Common myeloid progenitor, CD34-positive (primary cell): ENCODE measurements at regions of chr16 and their contacts with region 1.

Region 1: DNA sequence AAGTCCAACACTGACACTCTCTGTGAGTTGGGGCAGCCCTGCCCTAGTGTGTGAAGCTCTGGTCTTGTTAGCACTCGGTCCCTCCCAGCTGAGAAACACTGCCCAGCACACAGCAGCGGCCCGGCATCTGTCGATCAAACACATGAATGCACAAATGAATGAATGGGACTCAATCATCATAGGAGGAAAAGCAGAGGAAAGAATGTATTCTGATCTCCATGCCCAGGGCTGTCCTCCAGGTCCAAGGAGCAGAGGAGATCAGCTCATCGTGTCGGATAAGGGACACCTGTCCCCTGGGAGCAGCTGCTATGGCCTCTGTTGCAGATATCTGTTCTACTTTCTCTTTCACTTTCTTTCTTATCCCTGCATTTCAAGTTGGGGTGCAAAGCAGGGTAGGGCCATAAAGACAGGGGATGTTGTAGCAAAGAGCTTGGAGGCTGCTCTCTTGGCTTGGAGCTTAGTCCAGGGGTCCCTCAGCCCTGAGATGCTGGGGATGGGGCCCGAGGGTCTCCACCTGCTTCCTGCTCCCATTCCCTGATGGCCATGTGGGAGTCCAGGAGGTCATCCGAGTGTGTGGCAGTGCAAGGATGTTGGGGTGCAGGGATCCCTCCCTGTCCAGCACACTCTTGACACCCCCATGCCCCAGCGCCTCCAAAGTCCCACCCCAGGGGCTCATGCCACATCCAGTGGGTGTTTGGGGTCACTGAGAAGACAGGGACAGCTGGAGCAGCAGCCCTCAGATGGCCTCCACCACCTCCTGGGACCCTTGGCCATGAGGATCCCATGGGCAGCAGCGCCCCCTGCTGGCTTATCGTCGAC is 88.2 kb downstream of the IRF8 start:
- DNase-seq: peak in 2 of 3 donors; percentile 28 to 45
- H3K4me3 ChIP-seq: no peak overlapping the region
- H3K27ac ChIP-seq: no peak overlapping the region
- H3K4me1 ChIP-seq: peaks cover 9 to 41% (median 33%) of the 10 kb centered on the region in 4 experiments
- H3K27me3 ChIP-seq: peaks cover 0 to 76% (median 16%) of the 10 kb centered on the region in 5 experiments

Region 2: DNA sequence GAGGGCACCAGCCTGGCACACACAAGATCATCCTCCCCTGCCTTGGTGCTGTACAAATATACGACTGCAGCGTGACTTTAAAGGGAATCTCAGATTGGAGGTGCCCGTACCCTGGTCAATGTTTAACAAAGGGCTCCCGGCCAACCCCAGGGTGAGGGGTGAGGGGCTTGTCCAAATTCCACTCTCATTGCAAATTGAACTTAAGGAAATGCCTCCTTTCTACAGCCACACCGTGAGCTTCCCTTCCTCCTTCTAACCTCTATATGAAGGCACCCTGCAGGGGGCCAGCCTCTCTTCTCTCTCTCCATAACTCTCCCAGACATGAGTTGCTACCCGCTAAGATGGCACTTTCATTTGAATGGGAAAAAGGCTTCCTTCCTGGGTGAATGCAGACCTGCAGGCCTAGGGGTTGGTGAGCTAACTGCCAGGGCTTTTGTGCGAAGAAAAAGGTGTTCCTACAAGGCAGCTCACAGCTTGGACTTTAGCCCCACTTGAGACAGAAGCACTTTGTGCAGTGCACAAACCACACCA is 11.6 kb before region 1 on chr16:
- CTCF ChIA-PET with region 1: interaction called, 10 read pairs
- POLR2A ChIA-PET with region 1: no interaction called
- DNase-seq: no peak
- H3K4me3 ChIP-seq: no peak overlapping the region
- H3K27ac ChIP-seq: no peak overlapping the region
- H3K4me1 ChIP-seq: peaks cover 0 to 18% (median 4%) of the 10 kb centered on the region in 4 experiments
- H3K27me3 ChIP-seq: peaks cover 0 to 59% (median 6%) of the 10 kb centered on the region in 5 experiments

Region 3: DNA sequence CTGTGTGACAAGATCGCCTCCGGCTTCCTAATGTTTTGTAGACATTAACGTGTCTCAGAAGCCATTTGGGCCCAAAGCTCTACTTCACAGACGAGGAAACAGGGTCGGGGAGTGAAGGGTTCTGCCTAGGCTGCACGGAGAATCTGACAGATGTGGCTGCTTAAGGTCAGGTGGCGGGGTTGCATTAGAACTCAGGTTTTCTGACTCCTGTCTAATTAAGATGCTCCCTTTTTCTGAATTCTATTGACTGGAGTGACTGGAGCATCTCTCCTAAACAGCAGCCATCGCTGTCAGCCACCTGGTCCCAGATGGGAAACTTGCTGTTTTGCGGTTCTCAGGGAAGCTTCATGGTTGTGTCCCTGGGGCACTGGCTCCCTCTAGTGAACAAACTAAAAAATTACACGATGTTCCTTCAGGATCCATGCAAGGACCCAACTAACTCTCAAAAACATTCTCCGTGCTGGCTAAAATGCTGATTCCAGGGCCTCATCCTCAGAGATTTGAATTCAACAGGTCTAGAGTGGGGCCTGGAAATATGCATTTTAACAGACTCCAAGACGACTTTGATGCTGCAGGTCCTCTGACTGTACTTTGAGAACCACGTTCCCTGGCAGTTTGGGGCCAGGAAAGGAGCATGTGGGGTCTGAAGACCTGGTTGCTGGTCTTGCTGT is 29.2 kb after region 1 on chr16:
- CTCF ChIA-PET with region 1: interaction called, 29 read pairs
- POLR2A ChIA-PET with region 1: no interaction called
- DNase-seq: peak; percentile 59 to 65 (median 65)
- H3K4me3 ChIP-seq: no peak overlapping the region
- H3K27ac ChIP-seq: no peak overlapping the region
- H3K4me1 ChIP-seq: peaks cover 4 to 16% (median 14%) of the 10 kb centered on the region in 4 experiments
- H3K27me3 ChIP-seq: peaks cover 0 to 27% (median 5%) of the 10 kb centered on the region in 5 experiments